ENCODE measurements at regions of chr17 and their contacts with region 1.

Region 1: GRCh38 chr17:8091033-8091687 is 3.6 kb upstream of the ALOX12B start:
- DNase-seq: peak; percentile 71
- ATAC-seq: peak; percentile 90
- H3K4me3 Mint-ChIP-seq: peak overlapping the region; percentile 80
- H3K27ac Mint-ChIP-seq: peak overlapping the region; percentile 95
- H3K4me1 Mint-ChIP-seq: peaks cover 46% of the 10 kb centered on the region
- H3K27me3 Mint-ChIP-seq: peaks cover 7% of the 10 kb centered on the region
- CTCF ChIP-seq: no peak

Region 2: DNA sequence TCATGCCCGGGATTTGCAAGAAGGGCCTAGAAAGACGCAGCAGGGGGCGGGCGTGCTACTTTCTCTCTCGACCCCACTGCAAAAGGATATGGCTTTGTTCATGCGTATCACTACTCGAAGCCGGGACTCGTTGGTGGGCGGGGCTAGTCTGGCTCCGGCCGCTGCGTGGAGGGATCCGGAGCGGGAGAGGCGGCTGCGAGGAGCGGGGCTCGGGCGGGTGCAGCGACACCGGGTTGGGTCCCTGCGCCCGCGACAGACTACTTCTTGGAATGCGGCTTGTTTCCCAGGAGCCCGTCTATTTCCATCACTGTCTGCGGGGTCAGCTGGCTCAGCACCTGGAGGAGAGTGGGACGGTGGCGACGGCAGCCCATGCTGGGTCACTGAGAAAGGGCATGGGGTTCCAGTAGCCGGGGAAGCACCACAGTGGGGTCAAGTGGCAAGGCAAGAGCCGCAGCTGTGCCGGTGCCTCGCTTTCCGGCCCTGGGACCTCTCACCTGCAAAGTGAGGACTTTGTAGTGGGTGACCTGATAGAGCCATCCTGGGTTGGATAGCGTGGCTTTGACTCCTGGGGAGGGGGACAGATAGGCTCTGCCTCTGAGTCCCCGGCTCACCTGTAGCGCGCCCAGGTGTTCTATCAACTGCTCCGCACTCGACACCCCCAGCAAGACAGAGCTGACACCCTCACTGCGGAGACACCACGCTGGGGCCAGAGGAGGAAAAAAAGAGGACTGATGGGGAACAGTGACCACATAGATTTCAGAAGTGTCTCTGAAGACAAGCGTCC is 168.1 kb before region 1 on chr17:
- CTCF ChIA-PET with region 1: no interaction called
- POLR2A ChIA-PET with region 1: no interaction called
- intact Hi-C with region 1: no loop called
- DNase-seq: peak; percentile 71
- ATAC-seq: peak; percentile 98
- H3K4me3 Mint-ChIP-seq: peak overlapping the region; percentile 82
- H3K27ac Mint-ChIP-seq: peak overlapping the region; percentile 80
- H3K4me1 Mint-ChIP-seq: peaks cover 19% of the 10 kb centered on the region
- H3K27me3 Mint-ChIP-seq: no peaks in the 10 kb centered on the region
- CTCF ChIP-seq: no peak

Region 3: DNA sequence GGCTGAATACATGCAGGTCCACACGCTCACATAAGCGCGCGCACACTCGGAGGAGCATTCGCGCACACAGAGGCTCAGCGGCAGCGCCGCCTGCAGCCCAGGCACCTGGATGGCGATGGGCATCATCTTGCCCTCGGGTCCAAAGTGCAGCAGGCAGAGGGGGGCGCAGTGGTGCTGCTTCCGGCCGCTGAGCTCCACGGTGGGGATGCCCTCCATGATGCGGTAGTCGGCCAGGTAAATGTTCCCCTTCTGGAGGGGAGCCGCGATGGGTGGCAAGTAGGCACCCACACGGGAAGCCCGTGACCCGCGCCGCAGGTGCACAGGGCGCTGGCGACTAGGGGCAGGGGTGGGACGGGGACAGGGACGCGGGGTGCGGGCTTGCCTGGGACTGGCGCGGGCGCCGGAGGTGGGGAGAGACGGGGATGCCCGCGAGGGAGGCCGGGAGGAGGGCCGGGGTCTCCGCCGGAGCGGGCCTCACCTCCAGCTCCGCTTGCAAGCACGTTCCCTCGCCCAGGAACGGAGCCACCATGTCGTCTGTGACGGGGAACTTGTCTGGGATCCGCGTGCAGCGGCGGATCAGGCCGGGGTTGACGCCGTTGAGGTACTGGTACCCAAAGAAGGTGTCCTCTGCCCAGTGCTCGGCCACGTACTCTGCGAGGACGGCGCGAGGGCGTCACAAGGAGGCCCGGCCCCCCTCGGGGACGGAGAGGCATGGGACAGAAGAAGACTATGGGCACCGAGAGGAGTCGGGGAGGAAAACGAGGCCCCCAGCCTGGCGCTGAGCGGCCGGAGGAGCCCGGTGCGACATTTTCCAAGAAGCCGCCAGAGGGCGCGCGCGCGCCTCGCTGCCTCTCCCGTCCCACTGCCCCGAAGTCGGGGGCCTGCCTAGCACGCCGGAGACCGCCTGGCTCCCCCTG is 11.6 kb before region 1 on chr17:
- CTCF ChIA-PET with region 1: interaction called, 45 read pairs
- POLR2A ChIA-PET with region 1: interaction called, 12 read pairs
- intact Hi-C with region 1: loop called (anchors 1 kb)
- DNase-seq: peak; percentile 82
- ATAC-seq: peak; percentile 85
- H3K4me3 Mint-ChIP-seq: peak overlapping the region; percentile 89
- H3K27ac Mint-ChIP-seq: peak overlapping the region; percentile 83
- H3K4me1 Mint-ChIP-seq: peaks cover 17% of the 10 kb centered on the region
- H3K27me3 Mint-ChIP-seq: peaks cover 13% of the 10 kb centered on the region
- CTCF ChIP-seq: no peak

Region 4: DNA sequence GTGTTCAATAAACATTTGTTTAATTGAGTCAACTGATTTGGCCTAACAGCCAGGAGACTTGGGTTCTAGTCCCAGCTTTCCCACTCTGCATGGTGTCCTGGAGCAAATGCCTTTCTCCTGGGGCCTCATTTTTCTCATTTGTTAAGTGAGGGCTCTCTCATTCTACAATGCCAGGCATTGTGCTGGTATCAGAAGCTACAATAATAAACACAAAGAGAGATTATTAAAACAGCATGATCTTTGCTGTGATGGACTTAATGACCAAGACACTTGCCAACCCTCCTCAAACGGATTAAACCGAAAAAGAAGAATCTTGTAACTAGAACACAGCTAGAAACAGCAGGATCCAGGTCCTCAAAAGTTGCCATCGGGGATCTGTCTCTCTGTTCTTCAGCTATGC is 76.4 kb after region 1 on chr17:
- CTCF ChIA-PET with region 1: no interaction called
- POLR2A ChIA-PET with region 1: no interaction called
- intact Hi-C with region 1: no loop called
- DNase-seq: no peak
- ATAC-seq: no peak
- H3K4me3 Mint-ChIP-seq: no peak overlapping the region
- H3K27ac Mint-ChIP-seq: no peak overlapping the region
- H3K4me1 Mint-ChIP-seq: peaks cover 24% of the 10 kb centered on the region
- H3K27me3 Mint-ChIP-seq: no peaks in the 10 kb centered on the region
- CTCF ChIP-seq: no peak

Measured in activated B cell treated with CpG ODN at 0.5 μM for 24 hours (primary cell).